ENCODE measurements at regions of chr15 and their contacts with region 1.

Region 1: DNA sequence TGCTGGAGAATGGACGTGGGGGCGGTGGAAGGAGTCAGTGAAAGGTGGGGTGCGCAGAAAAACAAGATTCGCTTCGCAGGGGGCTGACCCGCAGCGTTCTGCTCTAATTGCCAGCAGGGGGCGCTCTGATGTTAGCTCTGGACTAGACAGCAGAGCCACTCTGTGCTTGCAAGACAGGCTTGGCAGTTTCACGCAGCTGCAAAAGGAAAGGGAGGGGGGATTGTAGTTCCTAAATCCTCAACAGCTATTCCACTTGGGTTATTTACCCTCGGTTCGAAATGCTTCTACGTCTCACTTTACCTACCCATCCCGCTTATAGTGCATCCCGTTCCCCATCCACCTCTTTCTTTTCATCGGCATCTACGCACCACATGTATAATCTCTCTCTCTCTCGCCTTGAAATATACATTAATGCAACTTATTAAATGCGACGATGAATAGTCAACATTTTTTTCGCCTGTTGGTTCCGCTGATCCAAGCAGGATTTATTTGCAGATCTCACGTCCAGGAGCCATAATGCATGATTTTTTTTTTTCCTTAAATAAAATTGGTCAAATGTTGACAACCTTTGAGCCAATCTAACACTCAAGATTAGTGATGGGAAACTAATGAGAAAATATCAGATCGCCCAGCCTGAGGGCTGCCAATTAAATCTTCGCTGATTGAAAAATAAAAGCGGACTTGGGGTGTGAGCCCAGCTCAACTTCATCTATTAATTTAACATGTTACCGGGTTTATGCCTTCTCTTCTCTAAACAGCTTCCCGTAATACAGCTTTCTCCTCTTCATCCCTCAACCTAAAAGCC is 216.4 kb downstream of the MEIS2 start:
- DNase-seq: peak; percentile 86
- ATAC-seq: peak; percentile 90
- H3K4me3 ChIP-seq: peak overlapping the region; percentile 35; the same call in 1 of the 2 replicates
- H3K27ac ChIP-seq: no peak overlapping the region
- H3K4me1 ChIP-seq: peaks cover 3% of the 10 kb centered on the region; the same call in 1 of the 2 replicates
- H3K27me3 ChIP-seq: peaks cover 24% of the 10 kb centered on the region
- CTCF ChIP-seq: peak; percentile 88
- POLR2A ChIP-seq: no peak
- RAD21 ChIP-seq: peak; percentile 91

Region 2: DNA sequence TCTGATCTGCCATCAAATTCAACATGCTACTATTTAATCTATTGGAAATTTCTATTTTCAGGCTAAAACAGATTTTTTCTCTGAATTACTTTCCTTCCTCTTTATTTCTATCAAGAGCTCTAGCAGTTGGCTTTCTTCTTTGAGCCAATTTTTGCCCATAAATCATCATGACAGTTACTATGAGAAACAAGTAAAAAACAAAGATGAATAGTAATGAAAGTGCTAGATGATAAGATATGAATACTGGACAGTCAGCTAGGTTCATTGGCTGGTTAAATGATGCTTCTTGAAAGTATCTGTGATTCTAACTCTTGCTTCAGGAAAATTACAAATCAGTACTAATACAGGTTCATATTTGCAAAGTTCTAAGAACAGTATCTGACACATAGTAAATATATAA is 1760.2 kb before region 1 on chr15:
- CTCF ChIA-PET with region 1: no interaction called
- POLR2A ChIA-PET with region 1: no interaction called
- dilution Hi-C with region 1: no loop called
- in situ Hi-C with region 1: no loop called
- intact Hi-C with region 1: no loop called
- DNase-seq: no peak
- ATAC-seq: no peak
- H3K4me3 ChIP-seq: no peak overlapping the region
- H3K27ac ChIP-seq: no peak overlapping the region
- H3K4me1 ChIP-seq: no peaks in the 10 kb centered on the region
- H3K27me3 ChIP-seq: no peaks in the 10 kb centered on the region
- CTCF ChIP-seq: no peak
- POLR2A ChIP-seq: no peak
- RAD21 ChIP-seq: no peak

Region 3: DNA sequence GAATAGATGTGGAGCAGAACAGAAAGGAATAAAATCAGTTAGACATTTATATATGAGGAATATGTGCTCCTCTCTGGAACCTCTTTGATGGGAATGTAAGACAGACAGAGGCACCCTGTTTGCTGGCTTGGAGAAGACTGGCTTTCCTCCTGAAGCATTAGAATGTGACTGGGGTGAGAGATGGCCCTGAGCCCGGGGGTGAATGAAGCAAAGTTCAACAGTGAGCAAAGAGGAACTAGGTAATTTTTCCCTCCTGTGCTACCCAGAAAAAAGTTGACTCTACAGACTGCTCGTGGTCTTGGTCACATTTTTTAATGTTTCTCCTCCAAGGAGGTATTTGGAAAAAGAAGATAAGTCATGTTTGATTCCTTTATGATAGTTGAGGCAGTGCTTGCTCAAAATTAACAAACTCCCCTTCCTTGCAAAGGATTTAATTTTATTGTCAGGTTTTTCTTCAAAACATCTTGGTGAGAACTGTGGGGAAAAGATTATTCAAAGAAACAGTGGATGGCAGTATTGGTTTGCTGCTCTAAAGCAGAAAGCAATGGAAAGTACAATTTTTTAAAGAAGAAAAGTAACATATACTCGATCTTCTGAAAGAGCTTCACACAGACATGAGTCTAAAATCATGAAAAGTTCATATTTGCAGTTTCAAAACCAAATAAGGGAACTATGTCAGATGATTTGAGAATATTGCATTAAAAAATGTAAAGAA is 674.9 kb before region 1 on chr15:
- CTCF ChIA-PET with region 1: no interaction called
- POLR2A ChIA-PET with region 1: no interaction called
- dilution Hi-C with region 1: no loop called
- in situ Hi-C with region 1: no loop called
- intact Hi-C with region 1: loop called (anchors 10 kb)
- DNase-seq: peak; percentile 37
- ATAC-seq: no peak
- H3K4me3 ChIP-seq: no peak overlapping the region
- H3K27ac ChIP-seq: no peak overlapping the region
- H3K4me1 ChIP-seq: 0 out of 2 replicates have a peak, but pooled peaks cover 2% of the 10 kb centered on the region
- H3K27me3 ChIP-seq: no peaks in the 10 kb centered on the region
- CTCF ChIP-seq: peak; percentile 54
- POLR2A ChIP-seq: no peak
- RAD21 ChIP-seq: peak; percentile 62

Region 4: DNA sequence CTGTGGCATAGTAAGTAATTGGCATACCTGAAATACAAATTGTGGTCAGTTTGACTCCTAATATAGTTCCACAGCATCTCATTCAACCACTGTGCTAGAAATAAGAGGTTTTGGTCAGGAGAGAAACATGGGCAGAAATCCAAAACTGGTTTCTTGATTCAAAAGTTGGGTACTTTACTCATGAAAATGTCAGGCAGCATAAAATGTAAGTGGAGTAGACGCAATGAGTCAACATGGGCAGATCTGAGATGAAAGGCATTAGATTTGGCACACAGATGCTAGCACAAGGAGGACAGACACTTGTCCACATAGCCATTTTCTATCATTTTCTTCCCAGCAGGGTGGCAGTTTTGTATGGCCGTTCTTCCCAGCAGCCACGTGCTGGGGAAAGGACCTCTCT is 560.3 kb before region 1 on chr15:
- CTCF ChIA-PET with region 1: no interaction called
- POLR2A ChIA-PET with region 1: no interaction called
- dilution Hi-C with region 1: no loop called
- in situ Hi-C with region 1: no loop called
- intact Hi-C with region 1: no loop called
- DNase-seq: no peak
- ATAC-seq: no peak
- H3K4me3 ChIP-seq: no peak overlapping the region
- H3K27ac ChIP-seq: no peak overlapping the region
- H3K4me1 ChIP-seq: no peaks in the 10 kb centered on the region
- H3K27me3 ChIP-seq: no peaks in the 10 kb centered on the region
- CTCF ChIP-seq: no peak
- POLR2A ChIP-seq: no peak
- RAD21 ChIP-seq: no peak

Region 5: GRCh38 chr15:36826948-36827347 is 57.0 kb before region 1 on chr15:
- CTCF ChIA-PET with region 1: no interaction called
- POLR2A ChIA-PET with region 1: interaction called, 14 read pairs
- dilution Hi-C with region 1: no loop called
- in situ Hi-C with region 1: no loop called
- intact Hi-C with region 1: no loop called
- DNase-seq: no peak
- ATAC-seq: no peak
- H3K4me3 ChIP-seq: no peak overlapping the region
- H3K27ac ChIP-seq: no peak overlapping the region
- H3K4me1 ChIP-seq: peaks cover 1% of the 10 kb centered on the region; the same call in 1 of the 2 replicates
- H3K27me3 ChIP-seq: no peaks in the 10 kb centered on the region
- CTCF ChIP-seq: no peak
- POLR2A ChIP-seq: no peak
- RAD21 ChIP-seq: no peak

Region 6: GRCh38 chr15:37125143-37125542 is 241.2 kb after region 1 on chr15:
- CTCF ChIA-PET with region 1: interaction called, 4 read pairs
- POLR2A ChIA-PET with region 1: no interaction called
- dilution Hi-C with region 1: no loop called
- in situ Hi-C with region 1: loop called (anchors 10 kb)
- intact Hi-C with region 1: no loop called
- DNase-seq: peak; percentile 66
- ATAC-seq: peak; percentile 46
- H3K4me3 ChIP-seq: no peak overlapping the region
- H3K27ac ChIP-seq: no peak overlapping the region
- H3K4me1 ChIP-seq: no peaks in the 10 kb centered on the region
- H3K27me3 ChIP-seq: no peaks in the 10 kb centered on the region
- CTCF ChIP-seq: no peak
- POLR2A ChIP-seq: no peak
- RAD21 ChIP-seq: no peak

Region 7: DNA sequence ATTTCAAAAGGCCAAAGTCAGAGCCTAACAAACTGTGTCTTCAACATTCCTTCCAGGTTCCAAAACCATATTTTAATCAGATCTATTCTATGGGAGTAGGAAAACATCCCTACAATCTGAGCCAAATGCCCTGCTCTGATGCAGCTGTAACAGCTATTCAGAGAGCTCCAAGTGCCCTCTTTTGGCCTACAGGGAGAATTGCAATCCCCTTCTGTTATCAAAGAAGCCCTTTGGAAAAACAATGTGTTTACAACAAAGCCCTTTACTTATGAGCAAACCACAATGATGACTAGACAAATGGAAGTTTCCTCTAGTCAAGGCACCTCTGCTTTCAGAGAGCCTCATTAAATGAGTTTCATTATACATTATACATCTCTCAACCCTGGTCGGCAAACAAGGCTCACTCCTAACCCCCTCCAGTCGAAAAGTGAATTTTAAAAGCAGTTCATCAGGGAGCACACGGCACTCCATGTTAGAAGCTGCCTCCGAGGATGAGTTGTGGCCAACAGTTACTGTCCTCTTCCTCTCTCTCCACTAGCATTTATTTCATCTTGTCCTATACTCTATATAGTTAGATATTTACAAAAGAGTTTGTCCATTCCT is 1008.0 kb after region 1 on chr15:
- CTCF ChIA-PET with region 1: interaction called, 3 read pairs
- POLR2A ChIA-PET with region 1: no interaction called
- dilution Hi-C with region 1: no loop called
- in situ Hi-C with region 1: loop called (anchors 25 kb)
- intact Hi-C with region 1: loop called (anchors 10 kb)
- DNase-seq: peak; percentile 70
- ATAC-seq: peak; percentile 99
- H3K4me3 ChIP-seq: no peak overlapping the region
- H3K27ac ChIP-seq: no peak overlapping the region
- H3K4me1 ChIP-seq: peaks cover 2% of the 10 kb centered on the region; the same call in 1 of the 2 replicates
- H3K27me3 ChIP-seq: no peaks in the 10 kb centered on the region
- CTCF ChIP-seq: peak; percentile 88
- POLR2A ChIP-seq: no peak
- RAD21 ChIP-seq: peak; percentile 88

Measured in IMR-90 (cell line).